GM18951 (cell line): ENCODE measurements at regions of chr1 and their contacts with region 1.

Region 1: GRCh38 chr1:200639790-200640669 is 19.5 kb upstream of the KIF14 start:
- POLR2A ChIP-seq: no peak

Region 2: GRCh38 chr1:200802865-200803512 is 163.0 kb after region 1 on chr1:
- in situ Hi-C with region 1: loop called (anchors 25 kb)
- POLR2A ChIP-seq: no peak